ENCODE measurements at regions of chr11 and their contacts with region 1.

Region 1: DNA sequence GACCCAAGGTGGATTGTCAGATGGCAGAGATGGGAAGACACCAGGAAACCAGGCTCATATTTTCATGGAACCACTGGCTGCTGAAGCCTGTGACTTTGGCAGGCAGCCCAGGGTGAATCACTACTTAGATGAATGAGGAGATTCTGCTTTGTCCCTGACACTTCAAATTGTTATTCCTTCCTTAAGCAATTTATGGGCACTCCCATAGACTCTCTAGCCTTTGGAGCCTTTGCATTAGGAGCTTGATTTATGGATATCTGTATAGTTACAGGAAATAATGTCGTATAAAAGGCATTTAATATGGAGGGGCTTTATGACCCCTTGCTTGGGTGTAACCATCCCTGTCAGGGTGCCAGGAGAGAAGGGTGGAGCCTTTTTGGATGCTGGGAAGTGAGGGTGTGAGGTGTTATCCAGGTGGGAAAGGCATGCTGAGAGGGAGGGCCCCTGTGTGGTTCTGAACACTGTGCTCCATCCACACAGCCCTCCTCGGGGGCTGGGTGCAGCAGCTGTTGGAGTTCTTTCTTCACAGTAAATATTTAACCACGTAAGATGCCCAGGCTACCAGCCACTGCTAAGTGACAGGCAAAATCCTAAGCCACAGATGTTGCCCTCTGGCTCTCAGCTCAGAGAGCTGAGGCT is 35.3 kb downstream of the IL18 start:
- DNase-seq: no peak
- ATAC-seq: peak; percentile 72
- H3K4me3 ChIP-seq: no peak overlapping the region
- H3K27ac ChIP-seq: no peak overlapping the region
- H3K4me1 ChIP-seq: no peaks in the 10 kb centered on the region
- H3K27me3 ChIP-seq: no peaks in the 10 kb centered on the region
- CTCF ChIP-seq: no peak

Region 2: DNA sequence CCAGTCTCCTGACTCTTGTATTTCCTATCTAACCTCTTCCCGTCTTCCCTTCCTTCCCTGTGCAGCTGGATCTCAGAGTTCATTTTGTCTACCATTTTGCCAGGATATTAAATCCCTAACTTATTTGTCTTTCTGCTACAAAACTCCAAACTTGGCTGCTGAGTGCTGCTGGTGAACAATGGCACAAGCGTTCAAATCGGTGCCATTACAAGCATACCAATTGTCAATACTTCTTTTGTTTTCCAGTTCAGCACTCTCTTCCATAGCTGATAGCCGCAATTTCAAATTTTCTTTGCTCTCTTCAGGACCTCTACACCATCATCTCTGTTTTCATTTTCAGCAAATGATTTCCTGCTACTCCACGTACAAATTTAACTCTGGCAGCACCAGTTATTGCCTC is 21.9 kb after region 1 on chr11:
- CTCF ChIA-PET with region 1: no interaction called
- POLR2A ChIA-PET with region 1: interaction called, 13 read pairs
- in situ Hi-C with region 1: no loop called
- intact Hi-C with region 1: no loop called
- DNase-seq: no peak
- ATAC-seq: no peak
- H3K4me3 ChIP-seq: no peak overlapping the region
- H3K27ac ChIP-seq: no peak overlapping the region
- H3K4me1 ChIP-seq: no peaks in the 10 kb centered on the region
- H3K27me3 ChIP-seq: no peaks in the 10 kb centered on the region
- CTCF ChIP-seq: no peak